ENCODE measurements at regions of chr10 and their contacts with region 1.

Region 1: GRCh38 chr10:21510241-21511074 is 15.0 kb downstream of the SKIDA1 start:
- DNase-seq: peak in 1 of 2 experiments; percentile 81
- H3K4me3 ChIP-seq: peak overlapping the region; percentile 52 to 69 (median 56)
- H3K27ac ChIP-seq: peak overlapping the region; percentile 94
- H3K4me1 ChIP-seq: peaks cover 16 to 56% (median 35%) of the 10 kb centered on the region in 4 experiments; a peak in 6 of 7 replicates
- H3K27me3 ChIP-seq: peaks cover 0 to 5% (median 5%) of the 10 kb centered on the region in 4 experiments; a peak in 3 of 7 replicates
- CTCF ChIP-seq: no peak
- EP300 ChIP-seq: no peak
- POLR2A ChIP-seq: peak; percentile 26 to 60
- RAD21 ChIP-seq: no peak

Region 2: GRCh38 chr10:21525367-21526183 is 15.1 kb after region 1 on chr10 and contains the start of gene SKIDA1:
- CTCF ChIA-PET with region 1: interaction called, 17 read pairs
- POLR2A ChIA-PET with region 1: interaction called, 352 read pairs
- DNase-seq: peak in 1 of 2 experiments; percentile 90
- H3K4me3 ChIP-seq: peak within 1 kb of the TSS; percentile 67 to 79 (median 76)
- H3K27ac ChIP-seq: peak within 1 kb of the TSS; percentile 93
- H3K4me1 ChIP-seq: peaks cover 7 to 38% (median 19%) of the 10 kb centered on the region in 4 experiments
- H3K27me3 ChIP-seq: 0 out of 7 replicates have a peak, but pooled peaks cover 0 to 3% (median 0%) of the 10 kb centered on the region in 4 experiments
- CTCF ChIP-seq: no peak
- EP300 ChIP-seq: no peak
- POLR2A ChIP-seq: peak; percentile 76 to 84
- RAD21 ChIP-seq: no peak
- total RNA-seq, gene SKIDA1: 8.0 and 8.2 TPM in 2 replicates

Region 3: GRCh38 chr10:21533467-21534279 is 23.2 kb after region 1 on chr10 and contains the start of gene MLLT10:
- CTCF ChIA-PET with region 1: interaction called, 3 read pairs
- POLR2A ChIA-PET with region 1: interaction called, 352 read pairs
- DNase-seq: peak; percentile 91 to 93
- H3K4me3 ChIP-seq: peak within 1 kb of the TSS; percentile 63 to 72 (median 66)
- H3K27ac ChIP-seq: peak within 1 kb of the TSS; percentile 89
- H3K4me1 ChIP-seq: peaks cover 0 to 9% (median 5%) of the 10 kb centered on the region in 4 experiments; a peak in 5 of 7 replicates
- H3K27me3 ChIP-seq: no peaks in the 10 kb centered on the region
- CTCF ChIP-seq: no peak
- EP300 ChIP-seq: no peak
- POLR2A ChIP-seq: peak; percentile 80 to 83
- RAD21 ChIP-seq: peak in 1 of 2 experiments; percentile 0; a peak in 1 of 4 replicates
- total RNA-seq, gene MLLT10: 53.1 and 56.9 TPM in 2 replicates

Region 4: DNA sequence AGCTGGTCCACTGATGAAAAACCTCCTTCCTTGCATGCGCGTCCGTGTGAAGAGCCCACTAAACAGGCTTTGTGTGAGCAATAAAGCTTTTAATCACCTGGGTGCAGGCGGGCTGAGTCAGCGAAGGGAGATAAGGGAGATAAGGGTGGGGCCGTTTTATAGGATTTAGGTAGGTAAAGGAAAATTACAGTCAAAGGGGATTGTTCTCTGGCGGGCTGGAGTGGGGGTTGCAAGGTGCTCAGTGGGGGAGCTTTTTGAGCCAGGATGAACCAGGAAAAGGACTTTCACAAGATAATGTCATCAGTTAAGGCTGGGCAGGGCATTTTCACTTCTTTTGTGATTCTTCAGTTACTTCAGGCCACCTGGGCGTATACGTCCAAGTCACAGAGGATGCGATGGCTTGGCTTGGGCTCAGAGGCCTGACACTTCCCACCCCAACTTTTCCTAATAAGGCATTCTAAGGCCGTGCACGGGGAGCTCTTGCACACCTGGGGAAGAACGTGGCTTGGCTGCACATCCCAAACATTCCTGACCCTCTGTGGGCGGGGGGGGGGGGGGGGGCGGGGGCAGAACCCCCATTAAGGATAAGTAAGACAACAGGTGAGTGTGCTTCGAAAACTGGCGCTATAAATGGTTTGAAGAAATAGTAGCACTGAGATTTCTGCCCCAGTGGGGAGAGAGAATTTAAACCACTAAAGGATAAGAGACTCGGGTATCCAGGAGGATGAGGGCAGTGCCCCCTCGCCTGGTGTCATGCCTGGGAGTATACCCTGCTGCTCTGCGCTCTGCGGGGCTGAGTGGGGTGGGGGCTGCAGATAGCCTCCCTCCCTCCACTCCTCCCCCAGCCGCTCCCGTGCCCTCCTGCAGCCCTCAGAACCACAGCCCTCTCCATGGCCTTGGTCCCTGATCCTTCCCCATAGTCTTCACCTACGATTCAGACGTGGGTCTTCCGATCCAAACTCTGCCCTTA is 241.2 kb after region 1 on chr10:
- CTCF ChIA-PET with region 1: no interaction called
- POLR2A ChIA-PET with region 1: interaction called, 10 read pairs
- DNase-seq: peak in 1 of 2 experiments; percentile 66
- H3K4me3 ChIP-seq: peak overlapping the region in 1 of 4 experiments; percentile 32; a peak in 1 of 8 replicates
- H3K27ac ChIP-seq: peak overlapping the region; percentile 90
- H3K4me1 ChIP-seq: peaks cover 13 to 40% (median 31%) of the 10 kb centered on the region in 4 experiments
- H3K27me3 ChIP-seq: no peaks in the 10 kb centered on the region
- CTCF ChIP-seq: no peak
- EP300 ChIP-seq: peak in 1 of 2 experiments; percentile 85; a peak in 1 of 3 replicates
- POLR2A ChIP-seq: peak in 1 of 2 experiments; percentile 47; a peak in 1 of 3 replicates
- RAD21 ChIP-seq: no peak